Activated CD4-positive, alpha-beta memory T cell treated with anti-CD3 and anti-CD28 coated beads for 36 hours (primary cell): ENCODE measurements at regions of chr5 and their contacts with region 1.

Region 1: DNA sequence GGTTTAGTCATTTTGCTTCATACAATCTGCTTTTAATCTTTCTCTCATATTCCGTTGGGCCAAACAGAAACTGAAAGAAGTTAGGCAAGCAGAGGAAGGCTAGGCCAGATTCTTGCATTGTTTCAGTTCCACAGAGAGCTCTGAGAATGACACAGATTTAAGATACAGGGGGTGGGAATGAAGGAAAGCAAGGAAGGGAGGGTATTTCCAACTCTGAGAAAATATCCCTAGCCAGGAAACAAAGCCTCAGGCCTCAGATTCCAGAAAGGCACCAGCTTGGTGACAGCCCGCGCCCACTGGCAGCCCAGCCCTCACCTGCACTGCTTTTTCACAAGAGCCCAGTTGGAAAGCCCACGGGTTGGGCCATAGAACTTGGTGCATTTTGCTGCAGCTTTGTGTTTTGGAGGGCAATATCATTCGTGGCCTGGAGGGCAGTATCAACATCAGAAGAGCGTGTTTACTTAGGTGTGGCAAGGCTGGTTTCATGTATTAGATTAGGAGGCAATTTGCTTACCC is 63.5 kb downstream of the ENC1 start:
- DNase-seq: peak; percentile 30
- H3K4me3 Mint-ChIP-seq: no peak overlapping the region
- H3K27ac Mint-ChIP-seq: peak overlapping the region; percentile 54
- H3K4me1 Mint-ChIP-seq: peaks cover 51% of the 10 kb centered on the region
- H3K27me3 Mint-ChIP-seq: peaks cover 5% of the 10 kb centered on the region

Region 2: DNA sequence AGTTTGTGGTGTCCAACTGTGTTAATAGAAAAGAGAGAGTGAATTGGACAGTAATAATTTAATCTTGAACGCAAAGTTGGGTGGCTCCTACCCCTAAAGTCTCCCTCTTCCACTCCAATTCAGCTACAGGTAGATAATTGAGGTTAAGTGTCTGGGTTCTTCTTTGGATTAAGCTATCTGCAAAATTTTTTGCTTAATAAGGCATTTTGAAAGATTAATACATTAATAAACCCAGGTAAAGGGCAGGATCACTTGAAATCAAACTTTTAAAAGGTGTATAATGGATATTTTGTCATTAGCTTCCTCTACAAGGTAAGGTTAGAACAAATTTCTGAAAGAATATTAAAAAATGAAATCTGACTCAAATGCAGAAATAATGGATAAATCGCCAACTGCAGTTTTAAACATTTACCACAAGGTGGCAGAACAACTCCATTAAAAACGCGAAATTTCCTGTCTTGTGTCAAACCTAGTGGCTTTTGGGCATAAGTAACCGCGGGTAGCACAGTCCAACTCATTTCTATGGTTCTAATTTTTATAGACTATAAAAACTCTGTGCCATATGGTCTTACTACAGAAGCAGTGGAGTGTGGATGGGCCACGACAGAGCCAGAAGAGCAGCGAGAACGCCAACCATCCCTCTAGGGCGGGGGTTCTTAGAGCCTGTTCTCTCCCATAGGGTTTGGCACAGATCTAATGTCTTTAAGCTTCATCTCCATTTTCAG is 674.5 kb before region 1 on chr5:
- CTCF ChIA-PET with region 1: interaction called, 3 read pairs
- POLR2A ChIA-PET with region 1: no interaction called
- intact Hi-C with region 1: loop called (anchors 1 kb)
- DNase-seq: no peak
- H3K4me3 Mint-ChIP-seq: no peak overlapping the region
- H3K27ac Mint-ChIP-seq: no peak overlapping the region
- H3K4me1 Mint-ChIP-seq: peaks cover 10% of the 10 kb centered on the region
- H3K27me3 Mint-ChIP-seq: peaks cover 37% of the 10 kb centered on the region

Region 3: GRCh38 chr5:74476046-74476818 is 100.8 kb before region 1 on chr5:
- CTCF ChIA-PET with region 1: no interaction called
- POLR2A ChIA-PET with region 1: no interaction called
- intact Hi-C with region 1: no loop called
- DNase-seq: no peak
- H3K4me3 Mint-ChIP-seq: no peak overlapping the region
- H3K27ac Mint-ChIP-seq: no peak overlapping the region
- H3K4me1 Mint-ChIP-seq: no peaks in the 10 kb centered on the region
- H3K27me3 Mint-ChIP-seq: peaks cover 4% of the 10 kb centered on the region

Region 4: DNA sequence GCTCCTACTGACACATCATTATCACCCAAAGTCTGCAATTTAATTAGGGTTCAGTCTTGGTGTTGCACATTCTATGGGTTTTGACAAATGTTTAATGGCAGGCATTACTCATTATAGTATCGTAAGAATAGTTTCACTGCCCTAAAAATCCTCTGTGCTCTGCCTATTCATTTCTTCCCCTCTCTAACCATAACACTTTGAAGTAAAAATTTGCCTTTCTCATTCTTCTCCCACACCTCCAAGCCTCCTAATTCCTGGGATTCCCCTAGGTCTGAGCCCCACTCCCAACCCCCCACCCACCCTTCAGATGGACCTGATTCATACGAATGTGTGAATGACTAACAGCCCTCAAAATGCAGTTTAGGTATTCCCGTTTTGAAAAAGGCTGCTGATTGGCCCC is 45.1 kb after region 1 on chr5:
- CTCF ChIA-PET with region 1: no interaction called
- POLR2A ChIA-PET with region 1: interaction called, 3 read pairs
- intact Hi-C with region 1: loop called (anchors 1 kb)
- DNase-seq: peak; percentile 54
- H3K4me3 Mint-ChIP-seq: no peak overlapping the region
- H3K27ac Mint-ChIP-seq: no peak overlapping the region
- H3K4me1 Mint-ChIP-seq: peaks cover 13% of the 10 kb centered on the region
- H3K27me3 Mint-ChIP-seq: peaks cover 40% of the 10 kb centered on the region

Region 5: DNA sequence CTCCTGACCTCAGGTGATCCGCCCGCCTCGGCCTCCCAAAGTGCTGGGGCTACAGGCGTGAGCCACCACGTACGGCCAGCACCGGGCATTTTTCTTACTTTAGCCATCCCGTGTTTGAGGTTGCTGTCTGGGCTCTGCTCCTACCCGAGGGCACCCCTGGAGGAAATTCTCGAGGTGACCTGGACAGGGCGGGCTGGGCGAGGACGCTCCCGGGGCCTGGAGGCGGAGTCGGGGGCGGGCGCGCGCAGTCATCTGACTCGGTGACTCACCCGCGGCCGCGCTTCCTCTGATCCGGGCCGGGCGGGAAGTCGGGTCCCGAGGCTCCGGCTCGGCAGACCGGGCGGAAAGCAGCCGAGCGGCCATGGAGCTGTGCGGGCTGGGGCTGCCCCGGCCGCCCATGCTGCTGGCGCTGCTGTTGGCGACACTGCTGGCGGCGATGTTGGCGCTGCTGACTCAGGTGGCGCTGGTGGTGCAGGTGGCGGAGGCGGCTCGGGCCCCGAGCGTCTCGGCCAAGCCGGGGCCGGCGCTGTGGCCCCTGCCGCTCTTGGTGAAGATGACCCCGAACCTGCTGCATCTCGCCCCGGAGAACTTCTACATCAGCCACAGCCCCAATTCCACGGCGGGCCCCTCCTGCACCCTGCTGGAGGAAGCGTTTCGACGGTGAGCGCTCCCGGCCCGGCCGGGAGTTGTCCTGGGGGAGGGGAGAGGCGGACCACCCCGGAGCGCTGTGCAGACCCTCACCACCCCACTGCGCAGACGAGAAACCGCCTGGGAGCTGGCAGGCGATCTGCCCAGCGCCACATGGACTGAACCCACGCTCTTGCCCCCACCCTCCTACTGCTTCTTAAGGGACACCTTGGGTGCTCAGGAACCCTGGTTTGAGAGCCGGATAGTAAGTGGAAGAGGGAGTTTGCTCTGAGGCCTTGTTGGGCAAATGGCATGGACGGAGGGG is 108.2 kb after region 1 on chr5 and contains the start of gene HEXB:
- CTCF ChIA-PET with region 1: no interaction called
- POLR2A ChIA-PET with region 1: no interaction called
- intact Hi-C with region 1: loop called (anchors 2 kb)
- DNase-seq: peak; percentile 92
- H3K4me3 Mint-ChIP-seq: peak within 1 kb of the TSS; percentile 79
- H3K27ac Mint-ChIP-seq: peak within 1 kb of the TSS; percentile 49
- H3K4me1 Mint-ChIP-seq: peaks cover 21% of the 10 kb centered on the region
- H3K27me3 Mint-ChIP-seq: no peaks in the 10 kb centered on the region
- total RNA-seq, gene HEXB: 67.1 to 68.5 TPM

Region 6: DNA sequence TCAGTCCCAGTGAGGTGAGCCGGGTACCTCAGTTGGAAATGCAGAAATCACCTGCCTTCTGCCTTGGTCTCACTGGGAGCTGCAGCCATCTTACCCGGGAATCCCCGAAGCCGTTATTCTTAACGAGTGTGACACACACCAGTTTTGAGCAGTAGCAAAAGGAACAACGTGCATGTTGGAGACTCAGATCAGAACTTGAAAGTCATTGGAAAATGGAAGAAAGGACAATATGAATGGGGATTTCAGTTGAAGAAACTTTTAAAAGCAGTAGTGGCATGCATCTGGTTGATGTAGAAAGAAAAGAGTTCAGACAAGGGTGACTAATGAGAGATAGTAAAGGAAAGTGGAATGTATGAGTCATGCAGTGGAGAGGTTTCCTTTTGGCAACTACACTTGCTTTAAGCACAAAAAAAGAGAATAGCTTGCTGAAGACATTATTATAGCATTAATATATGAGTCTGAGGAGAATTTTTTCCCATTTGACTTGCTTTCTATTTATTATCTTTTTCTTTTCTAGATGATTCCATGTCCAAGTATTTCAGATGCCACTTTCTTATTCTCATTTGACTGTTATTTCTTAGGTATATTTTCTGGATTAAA is 989.8 kb after region 1 on chr5:
- CTCF ChIA-PET with region 1: no interaction called
- POLR2A ChIA-PET with region 1: no interaction called
- intact Hi-C with region 1: loop called (anchors 5 kb)
- DNase-seq: peak; percentile 78
- H3K4me3 Mint-ChIP-seq: peak overlapping the region; percentile 57
- H3K27ac Mint-ChIP-seq: peak overlapping the region; percentile 96
- H3K4me1 Mint-ChIP-seq: peaks cover 69% of the 10 kb centered on the region
- H3K27me3 Mint-ChIP-seq: no peaks in the 10 kb centered on the region